ENCODE measurements at regions of chr10 and their contacts with region 1.

Region 1: GRCh38 chr10:124388823-124389612 is 29.7 kb downstream of the OAT start:
- DNase-seq: peak; percentile 80 to 97
- H3K4me3 ChIP-seq: no peak overlapping the region
- CTCF ChIP-seq: peak in 1 of 3 donors; percentile 54
- POLR2A ChIP-seq: no peak

Region 2: DNA sequence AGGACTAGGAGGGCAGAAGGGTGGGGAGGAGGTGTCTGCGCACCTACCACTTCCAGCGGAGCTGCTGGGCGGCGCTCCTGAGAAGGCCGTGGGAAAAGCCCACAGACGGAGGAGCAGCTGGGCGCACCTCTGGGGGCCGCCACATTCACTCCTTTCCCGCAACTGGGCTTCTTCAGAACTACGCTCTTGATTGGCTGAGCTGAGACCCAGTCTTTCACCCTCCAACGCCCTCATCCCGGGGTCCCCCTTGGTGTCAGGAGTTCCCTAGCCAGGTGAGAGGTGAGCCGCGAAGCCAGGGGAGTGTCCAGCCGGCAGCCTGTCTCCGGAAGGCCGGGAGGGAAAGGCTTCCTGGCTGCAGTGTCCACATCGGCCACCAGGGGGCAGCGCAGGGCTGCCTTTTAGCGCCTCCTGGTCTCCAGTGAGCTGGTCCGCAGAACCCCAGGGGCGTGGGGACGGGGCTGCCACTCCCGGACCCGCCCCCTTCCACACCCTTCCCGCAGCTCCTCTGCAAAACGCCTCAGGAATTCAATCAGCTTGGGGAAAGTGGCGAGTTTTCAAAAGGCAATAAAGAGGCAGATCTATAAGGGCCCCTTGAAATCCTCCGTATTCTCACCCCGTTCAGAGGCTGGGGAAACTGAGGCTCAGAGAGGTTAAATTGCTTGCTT is 394.5 kb before region 1 on chr10:
- intact Hi-C with region 1: loop called (anchors 2 kb)
- DNase-seq: peak; percentile 70 to 97
- H3K4me3 ChIP-seq: no peak overlapping the region
- CTCF ChIP-seq: peak in 1 of 3 donors; percentile 96
- POLR2A ChIP-seq: no peak

Region 3: GRCh38 chr10:124450012-124450781 is 61.2 kb after region 1 on chr10 and contains the start of gene NKX1-2:
- intact Hi-C with region 1: no loop called
- DNase-seq: no peak
- H3K4me3 ChIP-seq: no peak within 1 kb of the TSS
- CTCF ChIP-seq: no peak
- POLR2A ChIP-seq: no peak
- total RNA-seq, gene NKX1-2: 0.78 to 2.4 (median 1.3) TPM

Measured in lower leg skin (tissue), 4 donors.